WTC11 (cell line): ENCODE measurements at regions of chr5 and their contacts with region 1.

Region 1: GRCh38 chr5:72816311-72817145 is at the start of gene TNPO1:
- DNase-seq: peak; percentile 91
- ATAC-seq: peak; percentile 88
- H3K4me3 Mint-ChIP-seq: peak within 1 kb of the TSS; percentile 99
- H3K27ac Mint-ChIP-seq: peak within 1 kb of the TSS; percentile 89
- H3K4me1 Mint-ChIP-seq: peaks cover 25% of the 10 kb centered on the region
- H3K27me3 Mint-ChIP-seq: no peaks in the 10 kb centered on the region
- CTCF ChIP-seq: no peak
- total RNA-seq, gene TNPO1: 132 to 150 TPM (median 134 TPM) in 3 replicates

Region 2: GRCh38 chr5:72829707-72830106 is 13.2 kb after region 1 on chr5:
- CTCF ChIA-PET with region 1: interaction called, 16 read pairs
- POLR2A ChIA-PET with region 1: no interaction called
- DNase-seq: no peak
- ATAC-seq: peak; percentile 26; the same call in 1 of the 2 replicates
- H3K4me3 Mint-ChIP-seq: no peak overlapping the region
- H3K27ac Mint-ChIP-seq: no peak overlapping the region
- H3K4me1 Mint-ChIP-seq: peaks cover 11% of the 10 kb centered on the region
- H3K27me3 Mint-ChIP-seq: no peaks in the 10 kb centered on the region
- CTCF ChIP-seq: no peak